AG04450 (cell line): ENCODE measurements at regions of chr16 and their contacts with region 1.

Region 1: DNA sequence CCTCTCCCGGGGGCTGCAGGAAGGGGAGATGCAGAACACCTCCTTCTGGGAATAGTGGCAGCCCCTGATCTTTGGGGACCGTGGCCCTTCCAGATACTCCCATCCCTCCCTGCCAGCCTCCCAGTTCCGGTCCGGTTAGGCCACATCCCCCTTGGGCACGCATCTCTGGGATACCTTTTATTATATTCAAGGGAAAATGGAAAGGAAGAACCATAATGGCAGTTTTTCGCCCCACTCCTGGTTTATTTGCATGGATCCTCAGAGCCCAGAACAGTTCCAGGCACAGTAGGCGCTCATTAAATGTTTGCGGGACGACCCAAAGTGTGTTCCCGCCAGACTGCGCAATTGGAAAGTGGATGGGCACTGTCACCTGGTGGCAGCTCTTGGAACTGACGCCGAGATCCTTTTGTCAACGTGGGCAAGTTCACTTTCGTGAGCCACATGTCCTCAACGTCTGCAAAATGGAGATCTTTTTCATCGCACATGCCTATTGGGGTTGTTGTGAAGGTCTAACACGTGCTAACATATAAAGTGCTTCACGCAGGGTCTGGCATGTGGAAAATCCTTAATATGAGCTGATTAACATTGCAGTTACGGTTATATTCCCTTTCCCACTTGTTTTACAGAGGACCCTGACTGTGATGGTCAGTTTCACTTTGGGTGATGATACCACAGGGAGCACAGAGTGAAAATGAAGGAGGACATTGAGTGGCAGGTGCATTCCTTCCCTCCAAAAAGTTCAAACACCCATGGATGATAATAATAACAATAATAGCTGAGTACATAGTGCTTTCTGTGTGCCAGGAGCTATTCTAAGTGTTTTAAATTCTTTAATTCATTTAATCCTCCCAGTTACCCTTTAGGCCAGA is 1.7 kb upstream of the GPRC5B start:
- DNase-seq: peak; percentile 54
- H3K4me3 ChIP-seq: no peak overlapping the region
- H3K27ac ChIP-seq: no peak overlapping the region
- H3K27me3 ChIP-seq: peaks cover 3% of the 10 kb centered on the region
- CTCF ChIP-seq: peak; percentile 100

Region 2: GRCh38 chr16:19583665-19584300 is 302.5 kb before region 1 on chr16:
- CTCF ChIA-PET with region 1: interaction called, 25 read pairs
- POLR2A ChIA-PET with region 1: interaction called, 4 read pairs
- DNase-seq: peak; percentile 18
- H3K4me3 ChIP-seq: no peak overlapping the region
- H3K27ac ChIP-seq: no peak overlapping the region
- H3K27me3 ChIP-seq: no peaks in the 10 kb centered on the region
- CTCF ChIP-seq: peak; percentile 94

Region 3: DNA sequence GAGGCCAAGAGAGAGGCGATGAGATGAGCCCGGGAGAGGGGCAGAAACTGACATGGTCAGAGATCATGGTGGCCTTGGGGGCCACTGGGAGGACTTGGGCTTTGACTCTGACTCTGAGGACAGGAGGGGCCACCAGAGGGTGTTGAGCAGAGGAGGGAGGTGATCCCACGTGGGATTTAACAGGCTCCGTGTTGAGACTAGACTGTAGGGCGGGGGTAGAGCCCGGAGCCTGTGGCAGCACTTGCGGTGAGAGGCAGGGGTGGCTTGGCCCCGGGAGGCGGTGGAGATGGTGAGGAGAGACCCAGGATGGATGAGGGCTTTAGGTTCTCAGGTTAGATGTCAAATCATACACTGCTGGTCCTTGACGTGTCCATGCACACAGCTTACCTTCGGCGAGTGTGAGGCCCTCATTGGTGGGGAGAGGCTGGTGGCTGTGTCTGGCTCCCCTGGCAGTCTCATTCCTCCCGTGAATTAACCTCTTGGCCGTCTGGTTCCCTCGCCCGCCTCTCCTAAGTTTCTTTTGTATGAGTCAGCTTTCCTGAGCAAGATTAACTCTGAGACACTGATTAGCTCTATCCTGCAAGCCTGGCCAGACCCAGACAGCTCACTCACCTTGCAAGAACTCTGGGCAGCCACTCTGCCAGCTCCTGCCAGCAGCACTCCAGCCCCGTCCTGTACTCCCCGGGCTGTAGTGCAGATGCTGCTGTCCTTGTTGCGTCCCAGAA is 291.1 kb before region 1 on chr16:
- CTCF ChIA-PET with region 1: interaction called, 193 read pairs
- POLR2A ChIA-PET with region 1: no interaction called
- DNase-seq: peak; percentile 43
- H3K4me3 ChIP-seq: no peak overlapping the region
- H3K27ac ChIP-seq: peak overlapping the region; percentile 52
- H3K27me3 ChIP-seq: no peaks in the 10 kb centered on the region
- CTCF ChIP-seq: no peak

Region 4: GRCh38 chr16:19601083-19601976 is 285.0 kb before region 1 on chr16:
- CTCF ChIA-PET with region 1: interaction called, 193 read pairs
- POLR2A ChIA-PET with region 1: interaction called, 3 read pairs
- DNase-seq: no peak
- H3K4me3 ChIP-seq: no peak overlapping the region
- H3K27ac ChIP-seq: no peak overlapping the region
- H3K27me3 ChIP-seq: no peaks in the 10 kb centered on the region
- CTCF ChIP-seq: peak; percentile 65

Region 5: DNA sequence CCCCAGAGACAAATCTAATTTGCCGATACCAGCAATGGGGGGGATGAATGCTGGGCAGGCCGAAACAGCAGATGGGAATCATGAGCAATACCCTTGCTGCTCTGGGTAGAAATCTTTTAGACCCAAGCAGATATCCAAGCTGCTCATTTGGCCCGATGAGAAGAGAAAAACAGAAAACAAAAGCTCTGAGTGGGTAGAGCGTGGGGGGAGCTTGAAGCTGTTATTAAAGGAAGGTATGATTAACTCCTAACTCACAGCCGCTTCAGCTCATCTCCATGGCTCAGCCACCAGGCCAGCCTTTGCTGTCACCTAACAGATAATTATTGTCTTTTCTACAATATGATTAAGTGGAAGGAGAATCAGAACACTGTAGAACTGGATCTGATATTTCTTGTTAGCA is 272.5 kb before region 1 on chr16:
- CTCF ChIA-PET with region 1: interaction called, 11 read pairs
- POLR2A ChIA-PET with region 1: no interaction called
- DNase-seq: no peak
- H3K4me3 ChIP-seq: no peak overlapping the region
- H3K27ac ChIP-seq: no peak overlapping the region
- H3K27me3 ChIP-seq: no peaks in the 10 kb centered on the region
- CTCF ChIP-seq: no peak

Region 6: DNA sequence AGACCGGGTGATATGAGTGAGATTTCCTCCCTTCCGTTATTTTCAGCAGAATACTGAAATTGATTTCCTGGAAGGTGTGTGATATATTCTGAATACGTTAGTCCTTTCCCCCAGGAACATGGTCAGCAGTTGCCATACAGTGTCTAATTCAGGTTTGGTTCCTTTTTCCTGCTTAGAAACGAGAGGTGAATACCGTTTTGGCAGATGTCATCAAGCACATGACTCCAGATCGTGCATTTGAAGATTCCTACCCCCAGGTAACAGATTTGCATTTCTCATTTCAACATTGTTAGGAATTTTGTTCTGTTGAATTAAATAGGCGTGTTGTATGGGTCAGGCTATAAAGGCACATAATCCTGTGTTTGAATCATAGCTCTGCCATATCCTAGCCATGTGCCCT is 253.4 kb before region 1 on chr16:
- CTCF ChIA-PET with region 1: interaction called, 15 read pairs
- POLR2A ChIA-PET with region 1: no interaction called
- DNase-seq: no peak
- H3K4me3 ChIP-seq: no peak overlapping the region
- H3K27ac ChIP-seq: no peak overlapping the region
- H3K27me3 ChIP-seq: no peaks in the 10 kb centered on the region
- CTCF ChIP-seq: no peak

Region 7: DNA sequence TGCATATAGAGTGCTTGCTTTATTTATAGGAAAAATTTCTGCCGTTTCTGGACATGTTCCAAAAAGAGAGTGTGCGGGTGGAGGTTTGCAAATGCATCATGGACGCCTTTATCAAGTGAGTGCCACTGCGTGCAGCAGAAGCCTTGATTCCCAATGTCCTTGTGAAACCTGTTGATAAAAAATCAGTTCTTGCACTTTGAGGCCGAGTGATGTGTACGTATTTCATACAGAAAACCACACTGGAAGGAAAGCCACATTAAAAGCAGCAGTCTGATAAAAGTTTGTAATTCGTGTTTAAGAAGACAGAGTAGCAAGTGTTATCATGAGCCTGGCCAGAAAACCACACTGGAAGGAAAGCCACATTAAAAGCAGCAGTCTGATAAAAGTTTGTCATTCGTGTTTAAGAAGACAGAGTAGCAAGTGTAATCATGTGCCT is 246.3 kb before region 1 on chr16:
- CTCF ChIA-PET with region 1: interaction called, 12 read pairs
- POLR2A ChIA-PET with region 1: no interaction called
- DNase-seq: no peak
- H3K4me3 ChIP-seq: no peak overlapping the region
- H3K27ac ChIP-seq: no peak overlapping the region
- H3K27me3 ChIP-seq: no peaks in the 10 kb centered on the region
- CTCF ChIP-seq: no peak

Region 8: GRCh38 chr16:19914877-19915276 is 28.6 kb after region 1 on chr16:
- CTCF ChIA-PET with region 1: no interaction called
- POLR2A ChIA-PET with region 1: no interaction called
- DNase-seq: no peak
- H3K4me3 ChIP-seq: no peak overlapping the region
- H3K27ac ChIP-seq: no peak overlapping the region
- H3K27me3 ChIP-seq: no peaks in the 10 kb centered on the region
- CTCF ChIP-seq: no peak